Left lung (tissue), 14 donors: ENCODE measurements at regions of chr4 and their contacts with region 1.

Region 1: GRCh38 chr4:41281038-41281634 is 24.4 kb downstream of the UCHL1 start:
- DNase-seq: peak in 2 of 4 donors; percentile 77 to 85
- ATAC-seq: peak; percentile 100
- H3K4me3 ChIP-seq: no peak overlapping the region
- H3K27ac ChIP-seq: no peak overlapping the region
- H3K4me1 ChIP-seq: no peaks in the 10 kb centered on the region
- H3K27me3 ChIP-seq: no peaks in the 10 kb centered on the region
- CTCF ChIP-seq: peak; percentile 66 to 85

Region 2: DNA sequence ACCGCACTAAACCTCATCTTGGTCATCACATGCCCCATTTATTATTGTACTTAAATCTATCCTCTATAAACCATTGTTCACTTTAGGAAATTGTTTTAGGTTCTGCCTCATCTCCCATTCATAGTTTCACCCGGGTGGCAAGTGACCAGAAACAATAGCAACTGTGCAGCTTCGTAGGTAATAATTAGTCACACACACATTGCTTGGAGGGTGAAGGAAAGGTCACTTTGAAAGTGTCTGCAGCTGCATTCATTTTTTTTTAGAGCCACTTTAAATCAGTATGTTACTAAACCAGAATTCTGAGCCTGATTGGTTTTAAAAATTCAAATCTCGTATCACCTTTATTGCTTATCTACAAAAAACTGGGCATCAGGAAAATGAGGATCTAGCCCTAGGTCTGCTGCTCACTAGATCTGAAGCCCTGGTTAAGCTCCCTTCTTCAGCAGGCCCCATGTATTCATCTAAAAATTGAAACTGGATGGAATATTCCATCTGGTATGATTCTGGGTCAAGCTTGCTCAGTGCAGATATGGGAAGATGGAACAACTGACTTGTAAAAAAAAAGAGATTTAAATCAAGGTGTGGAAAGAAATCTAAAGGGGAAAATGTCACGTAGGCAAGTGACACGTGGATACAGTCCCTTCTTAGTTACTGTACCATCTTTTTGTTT is 319.2 kb after region 1 on chr4:
- intact Hi-C with region 1: no loop called
- DNase-seq: no peak
- ATAC-seq: no peak
- H3K4me3 ChIP-seq: no peak overlapping the region
- H3K27ac ChIP-seq: no peak overlapping the region
- H3K4me1 ChIP-seq: peaks cover 3 to 4% of the 10 kb centered on the region in 2 donors
- H3K27me3 ChIP-seq: no peaks in the 10 kb centered on the region
- CTCF ChIP-seq: no peak

Region 3: DNA sequence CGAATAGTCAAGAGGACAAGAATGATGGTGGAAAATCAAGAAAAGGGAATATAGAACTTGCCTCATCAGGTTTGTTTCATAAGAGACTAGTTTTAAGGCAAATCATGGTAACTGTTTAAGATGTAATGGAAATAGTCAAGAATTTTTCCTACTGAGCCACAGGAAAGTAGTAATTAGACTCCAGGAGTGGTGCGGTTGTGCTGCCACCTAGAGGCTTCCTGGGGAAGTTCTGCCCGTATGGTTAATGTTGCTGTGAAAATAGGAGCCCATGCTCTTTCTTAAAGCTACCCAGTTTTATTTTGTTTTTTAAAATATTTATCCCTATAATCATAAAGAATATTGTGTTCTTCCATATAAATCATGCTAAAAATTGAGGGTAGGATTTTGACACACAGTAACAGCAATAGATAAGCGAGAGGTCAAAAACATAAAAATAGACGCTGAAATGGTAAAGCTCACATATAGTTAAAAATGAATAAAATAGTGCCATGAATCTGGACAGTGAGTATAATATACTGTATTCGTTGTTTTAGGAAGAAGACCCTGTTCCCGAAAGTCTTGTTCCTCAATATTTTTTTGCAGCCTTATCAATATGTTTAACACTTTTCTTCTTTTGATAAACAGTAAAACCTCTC is 380.4 kb after region 1 on chr4:
- intact Hi-C with region 1: loop called in 1 of 2 experiments (anchors 5 kb)
- DNase-seq: peak in 2 of 4 donors; percentile 56 to 76
- ATAC-seq: peak; percentile 85
- H3K4me3 ChIP-seq: no peak overlapping the region
- H3K27ac ChIP-seq: no peak overlapping the region
- H3K4me1 ChIP-seq: peaks cover 3 to 4% of the 10 kb centered on the region in 2 donors
- H3K27me3 ChIP-seq: no peaks in the 10 kb centered on the region
- CTCF ChIP-seq: peak; percentile 83 to 95